IMR-90 (cell line): ENCODE measurements at regions of chr16 and their contacts with region 1.

Region 1: GRCh38 chr16:15440852-15441251 is 6.5 kb downstream of the BMERB1 start:
- DNase-seq: peak; percentile 79
- ATAC-seq: peak; percentile 65
- H3K4me3 ChIP-seq: no peak overlapping the region
- H3K27ac ChIP-seq: peak overlapping the region; percentile 6
- H3K4me1 ChIP-seq: peaks cover 19% of the 10 kb centered on the region
- H3K27me3 ChIP-seq: no peaks in the 10 kb centered on the region
- CTCF ChIP-seq: no peak
- POLR2A ChIP-seq: no peak
- RAD21 ChIP-seq: no peak

Region 2: DNA sequence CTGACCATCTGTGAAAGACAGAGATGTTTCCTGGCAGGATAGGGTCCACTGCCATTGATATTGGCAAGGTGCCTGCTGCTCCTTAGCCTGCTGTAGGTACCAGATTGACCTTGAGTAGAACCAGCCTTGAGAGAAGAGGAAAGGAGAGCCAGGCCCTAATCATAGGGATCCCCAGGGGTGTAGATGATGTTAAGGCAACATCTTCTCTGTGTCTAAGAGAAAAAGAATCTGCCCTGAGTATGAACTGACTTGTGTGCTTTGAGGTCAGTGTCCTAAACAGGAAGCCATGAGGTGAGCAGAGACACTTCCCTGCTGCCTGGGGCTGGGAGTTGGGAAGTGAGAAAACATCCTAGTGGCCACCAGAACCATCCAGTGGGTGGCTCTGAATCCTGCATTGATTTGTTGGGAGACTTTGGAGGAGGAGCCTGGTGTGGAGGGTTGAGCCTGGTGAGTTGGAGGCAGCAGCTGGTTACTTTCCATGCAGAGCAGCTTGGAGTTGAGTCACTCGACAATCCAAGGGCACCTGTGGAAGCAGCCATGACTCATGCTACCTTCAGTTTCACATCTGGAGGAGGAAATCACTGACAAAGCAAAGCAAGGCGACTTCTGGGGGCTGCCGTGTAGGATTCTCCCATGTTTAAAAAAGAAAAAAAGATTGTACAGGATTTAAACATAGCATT is 41.4 kb after region 1 on chr16:
- CTCF ChIA-PET with region 1: no interaction called
- POLR2A ChIA-PET with region 1: no interaction called
- dilution Hi-C with region 1: no loop called
- in situ Hi-C with region 1: loop called (anchors 5 kb)
- intact Hi-C with region 1: no loop called
- DNase-seq: peak; percentile 99
- ATAC-seq: peak; percentile 98
- H3K4me3 ChIP-seq: no peak overlapping the region
- H3K27ac ChIP-seq: peak overlapping the region; percentile 59
- H3K4me1 ChIP-seq: peaks cover 6% of the 10 kb centered on the region
- H3K27me3 ChIP-seq: no peaks in the 10 kb centered on the region
- CTCF ChIP-seq: peak; percentile 37
- POLR2A ChIP-seq: no peak
- RAD21 ChIP-seq: peak; percentile 39

Region 3: DNA sequence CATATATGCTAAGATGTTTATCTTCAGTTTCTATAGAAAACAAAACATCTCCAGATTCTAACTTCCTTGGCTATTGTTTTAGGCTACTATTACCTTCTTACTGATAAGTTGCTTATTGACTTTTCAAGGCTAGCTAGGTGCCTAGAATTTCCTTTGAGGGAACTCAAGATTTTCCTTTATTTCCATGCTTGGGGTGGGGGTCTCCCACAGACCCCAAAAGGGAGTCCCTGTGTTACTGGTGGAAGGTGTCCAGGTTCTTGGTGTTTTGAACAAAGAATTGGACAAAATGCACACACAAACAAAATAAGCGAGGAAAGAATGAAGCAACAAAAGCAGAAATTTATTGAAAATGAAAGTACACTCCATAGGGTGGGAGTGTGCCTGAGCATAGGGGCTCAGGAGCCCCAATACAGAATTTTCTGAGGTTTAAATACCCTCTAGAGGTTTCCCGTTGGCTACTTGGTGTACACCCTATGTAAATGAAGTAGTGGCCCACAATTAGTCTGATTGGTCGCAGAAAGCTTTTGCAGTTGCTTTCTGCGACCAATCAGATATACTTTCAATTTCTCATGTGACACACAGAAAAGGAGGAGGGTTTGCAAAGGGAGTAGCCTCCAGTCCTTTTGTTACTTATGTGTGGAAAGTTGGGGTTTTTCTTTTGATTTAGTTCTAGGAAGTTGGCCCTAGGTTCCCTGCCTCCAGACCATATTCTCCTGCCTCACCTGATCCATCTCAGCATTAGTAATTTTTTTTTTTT is 134.6 kb after region 1 on chr16:
- CTCF ChIA-PET with region 1: no interaction called
- POLR2A ChIA-PET with region 1: no interaction called
- dilution Hi-C with region 1: no loop called
- in situ Hi-C with region 1: no loop called
- intact Hi-C with region 1: no loop called
- DNase-seq: no peak
- ATAC-seq: no peak
- H3K4me3 ChIP-seq: no peak overlapping the region
- H3K27ac ChIP-seq: no peak overlapping the region
- H3K4me1 ChIP-seq: peaks cover 12% of the 10 kb centered on the region
- H3K27me3 ChIP-seq: no peaks in the 10 kb centered on the region
- CTCF ChIP-seq: no peak
- POLR2A ChIP-seq: no peak
- RAD21 ChIP-seq: no peak